ENCODE measurements at regions of chr6 and their contacts with region 1.

Region 1: DNA sequence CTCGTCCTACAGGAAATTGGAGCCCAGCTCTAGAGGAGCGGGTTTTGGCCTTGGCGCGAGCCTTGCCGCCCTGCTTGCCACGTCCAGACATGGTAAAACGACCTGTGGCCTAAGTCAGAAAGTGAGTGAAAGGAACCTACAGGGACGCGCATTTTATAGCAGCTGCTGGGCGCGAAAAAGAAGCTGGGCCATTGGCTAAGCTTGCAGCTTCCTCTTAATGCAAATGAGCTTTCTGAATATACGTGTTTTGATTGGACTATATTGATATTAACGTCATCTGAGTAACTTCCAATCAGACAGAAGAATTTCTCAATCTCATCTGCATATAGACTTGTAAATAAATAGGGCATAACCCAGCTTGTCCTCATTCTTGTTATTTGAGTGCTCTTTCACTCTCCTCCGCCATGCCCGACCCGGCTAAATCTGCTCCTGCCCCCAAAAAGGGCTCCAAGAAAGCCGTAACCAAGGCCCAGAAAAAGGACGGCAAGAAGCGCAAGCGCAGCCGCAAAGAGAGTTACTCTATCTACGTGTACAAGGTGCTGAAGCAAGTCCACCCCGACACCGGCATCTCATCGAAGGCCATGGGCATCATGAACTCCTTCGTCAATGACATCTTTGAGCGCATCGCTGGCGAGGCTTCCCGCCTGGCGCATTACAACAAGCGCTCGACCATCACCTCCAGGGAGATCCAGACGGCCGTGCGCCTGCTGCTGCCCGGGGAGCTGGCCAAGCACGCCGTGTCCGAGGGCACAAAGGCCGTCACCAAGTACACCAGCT is 18.9 kb downstream of the OR2B2 start:
- DNase-seq: peak; percentile 96
- ATAC-seq: peak; percentile 55
- H3K4me3 Mint-ChIP-seq: no peak overlapping the region
- H3K27ac Mint-ChIP-seq: no peak overlapping the region
- H3K4me1 Mint-ChIP-seq: peaks cover 56% of the 10 kb centered on the region
- H3K27me3 Mint-ChIP-seq: no peaks in the 10 kb centered on the region

Region 2: DNA sequence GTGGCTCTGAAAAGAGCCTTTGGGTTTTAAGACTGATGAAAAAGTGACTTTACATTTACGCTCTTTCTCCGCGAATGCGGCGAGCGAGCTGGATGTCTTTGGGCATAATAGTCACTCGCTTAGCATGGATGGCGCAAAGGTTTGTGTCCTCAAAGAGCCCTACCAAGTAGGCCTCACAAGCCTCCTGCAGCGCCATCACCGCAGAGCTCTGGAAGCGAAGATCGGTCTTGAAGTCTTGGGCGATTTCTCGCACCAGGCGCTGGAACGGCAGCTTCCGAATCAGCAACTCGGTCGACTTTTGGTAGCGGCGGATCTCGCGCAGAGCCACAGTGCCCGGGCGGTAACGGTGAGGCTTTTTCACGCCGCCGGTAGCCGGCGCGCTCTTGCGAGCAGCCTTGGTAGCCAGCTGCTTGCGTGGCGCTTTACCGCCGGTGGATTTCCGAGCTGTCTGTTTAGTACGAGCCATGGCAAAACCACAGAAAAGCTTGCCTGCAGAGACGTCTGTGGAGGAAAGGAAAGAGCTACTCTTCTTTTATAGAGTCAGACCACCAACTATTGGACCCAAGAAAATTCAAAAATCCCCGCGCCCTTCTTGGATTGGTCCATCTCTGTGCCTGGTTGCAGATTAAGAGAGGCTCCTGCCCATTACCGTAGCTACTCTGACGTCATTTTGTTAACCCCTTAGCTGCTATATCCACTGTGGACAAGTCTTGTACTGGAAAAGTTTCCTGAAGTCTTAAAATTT is 1861.5 kb before region 1 on chr6:
- CTCF ChIA-PET with region 1: no interaction called
- POLR2A ChIA-PET with region 1: interaction called, 50 read pairs
- DNase-seq: peak; percentile 97
- ATAC-seq: peak; percentile 66
- H3K4me3 Mint-ChIP-seq: peak overlapping the region; percentile 93
- H3K27ac Mint-ChIP-seq: peak overlapping the region; percentile 99
- H3K4me1 Mint-ChIP-seq: peaks cover 68% of the 10 kb centered on the region
- H3K27me3 Mint-ChIP-seq: peaks cover 3% of the 10 kb centered on the region

Region 3: GRCh38 chr6:26196846-26197648 is 1696.2 kb before region 1 on chr6:
- CTCF ChIA-PET with region 1: no interaction called
- POLR2A ChIA-PET with region 1: interaction called, 57 read pairs
- DNase-seq: peak; percentile 92
- ATAC-seq: peak; percentile 43
- H3K4me3 Mint-ChIP-seq: peak overlapping the region; percentile 99
- H3K27ac Mint-ChIP-seq: peak overlapping the region; percentile 93
- H3K4me1 Mint-ChIP-seq: peaks cover 50% of the 10 kb centered on the region
- H3K27me3 Mint-ChIP-seq: no peaks in the 10 kb centered on the region

Region 4: GRCh38 chr6:27132532-27133280 is 760.5 kb before region 1 on chr6:
- CTCF ChIA-PET with region 1: no interaction called
- POLR2A ChIA-PET with region 1: interaction called, 188 read pairs
- DNase-seq: peak; percentile 95
- ATAC-seq: peak; percentile 76
- H3K4me3 Mint-ChIP-seq: no peak overlapping the region
- H3K27ac Mint-ChIP-seq: no peak overlapping the region
- H3K4me1 Mint-ChIP-seq: peaks cover 68% of the 10 kb centered on the region
- H3K27me3 Mint-ChIP-seq: no peaks in the 10 kb centered on the region

Region 5: DNA sequence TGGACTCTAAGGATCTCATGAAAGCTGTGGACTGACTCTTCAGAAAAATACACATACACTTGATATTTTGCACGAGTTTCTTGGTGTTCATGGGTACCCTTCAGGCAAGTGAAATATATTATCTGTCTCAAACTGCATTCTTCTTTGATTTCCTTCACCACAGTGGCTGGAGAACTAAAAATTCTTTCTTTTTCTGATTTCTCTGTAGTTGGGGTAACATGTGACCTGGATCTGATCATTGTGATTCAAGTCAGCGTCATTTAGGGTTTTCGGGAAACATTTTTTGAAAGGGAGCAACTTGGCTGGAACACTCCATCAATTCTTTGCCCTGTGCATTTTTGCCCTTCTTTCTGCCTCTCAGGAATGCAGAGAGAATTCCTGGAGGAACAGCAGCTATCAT is 186.8 kb before region 1 on chr6:
- CTCF ChIA-PET with region 1: no interaction called
- POLR2A ChIA-PET with region 1: no interaction called
- DNase-seq: no peak
- ATAC-seq: no peak
- H3K4me3 Mint-ChIP-seq: no peak overlapping the region
- H3K27ac Mint-ChIP-seq: no peak overlapping the region
- H3K4me1 Mint-ChIP-seq: peaks cover 4% of the 10 kb centered on the region
- H3K27me3 Mint-ChIP-seq: no peaks in the 10 kb centered on the region

Region 6: GRCh38 chr6:27753668-27754407 is 139.4 kb before region 1 on chr6:
- CTCF ChIA-PET with region 1: interaction called, 6 read pairs
- POLR2A ChIA-PET with region 1: interaction called, 16 read pairs
- DNase-seq: peak; percentile 86
- ATAC-seq: peak; percentile 69
- H3K4me3 Mint-ChIP-seq: peak overlapping the region; percentile 90
- H3K27ac Mint-ChIP-seq: peak overlapping the region; percentile 76
- H3K4me1 Mint-ChIP-seq: peaks cover 41% of the 10 kb centered on the region
- H3K27me3 Mint-ChIP-seq: peaks cover 6% of the 10 kb centered on the region

Region 7: GRCh38 chr6:27854421-27854820 is 38.8 kb before region 1 on chr6:
- CTCF ChIA-PET with region 1: no interaction called
- POLR2A ChIA-PET with region 1: interaction called, 12 read pairs
- DNase-seq: no peak
- ATAC-seq: no peak
- H3K4me3 Mint-ChIP-seq: no peak overlapping the region
- H3K27ac Mint-ChIP-seq: no peak overlapping the region
- H3K4me1 Mint-ChIP-seq: no peaks in the 10 kb centered on the region
- H3K27me3 Mint-ChIP-seq: peaks cover 7% of the 10 kb centered on the region

Region 8: GRCh38 chr6:28335564-28336283 is 442.5 kb after region 1 on chr6 and contains the start of gene ZSCAN31:
- CTCF ChIA-PET with region 1: no interaction called
- POLR2A ChIA-PET with region 1: interaction called, 13 read pairs
- DNase-seq: peak; percentile 79
- ATAC-seq: peak; percentile 91
- H3K4me3 Mint-ChIP-seq: no peak within 1 kb of the TSS
- H3K27ac Mint-ChIP-seq: no peak within 1 kb of the TSS
- H3K4me1 Mint-ChIP-seq: peaks cover 2% of the 10 kb centered on the region
- H3K27me3 Mint-ChIP-seq: no peaks in the 10 kb centered on the region
- total RNA-seq, gene ZSCAN31: 0.68 to 0.78 TPM

Measured in activated CD8-positive, alpha-beta T cell treated with anti-CD3 and anti-CD28 coated beads, Interleukin-2, amount 10 ng/mL, durations not matched to agents 7 days and 5 days (primary cell).